ENCODE measurements at regions of chr1 and their contacts with region 1.

Region 1: DNA sequence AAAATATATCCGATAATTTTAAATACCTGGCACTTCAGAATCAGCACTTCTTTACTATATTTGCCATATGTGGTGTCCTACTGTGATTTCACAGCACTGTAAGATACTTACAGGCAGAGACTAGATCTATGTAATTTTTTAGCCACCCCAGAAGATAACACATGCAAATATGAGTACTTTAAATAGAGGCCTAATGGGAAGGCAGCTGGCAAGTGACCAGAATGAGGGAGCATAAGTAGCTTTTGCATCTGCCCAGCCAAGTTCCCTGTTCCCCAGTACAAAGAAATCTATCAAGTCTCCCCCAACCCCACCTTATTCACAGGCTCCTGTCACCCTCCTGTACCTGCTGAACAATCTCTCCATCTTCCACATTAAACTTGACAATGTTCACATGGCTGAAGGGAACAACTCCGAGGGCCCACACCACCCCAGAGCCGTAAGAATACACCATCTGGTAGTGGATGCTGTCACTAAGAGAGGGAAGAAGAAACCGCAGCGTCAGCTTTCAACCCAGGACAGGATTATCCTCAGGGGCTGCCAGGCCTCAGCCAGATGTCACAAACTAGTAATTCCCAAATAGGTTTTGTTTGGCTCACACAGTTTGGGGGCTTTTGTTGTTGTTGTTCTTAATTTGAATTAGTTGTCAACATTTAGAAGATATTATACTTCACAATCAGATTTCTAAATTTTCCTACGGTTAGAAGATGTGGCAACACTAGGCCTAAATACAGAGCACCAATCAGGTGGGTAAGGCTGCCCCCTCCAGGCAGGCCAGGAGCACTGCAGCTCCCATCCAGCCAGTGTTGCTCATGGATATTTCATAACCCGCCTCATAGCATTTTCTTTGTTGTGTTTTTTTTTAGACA is 10.4 kb downstream of the EMC1 start:
- DNase-seq: peak; percentile 60
- H3K4me3 ChIP-seq: no peak overlapping the region
- H3K27ac ChIP-seq: no peak overlapping the region
- H3K4me1 ChIP-seq: no peaks in the 10 kb centered on the region
- H3K27me3 ChIP-seq: no peaks in the 10 kb centered on the region
- CTCF ChIP-seq: peak; percentile 99

Region 2: GRCh38 chr1:19179597-19180264 is 61.2 kb before region 1 on chr1:
- intact Hi-C with region 1: loop called (anchors 5 kb)
- DNase-seq: no peak
- H3K4me3 ChIP-seq: no peak overlapping the region
- H3K27ac ChIP-seq: no peak overlapping the region
- H3K4me1 ChIP-seq: no peaks in the 10 kb centered on the region
- H3K27me3 ChIP-seq: no peaks in the 10 kb centered on the region
- CTCF ChIP-seq: no peak

Region 3: DNA sequence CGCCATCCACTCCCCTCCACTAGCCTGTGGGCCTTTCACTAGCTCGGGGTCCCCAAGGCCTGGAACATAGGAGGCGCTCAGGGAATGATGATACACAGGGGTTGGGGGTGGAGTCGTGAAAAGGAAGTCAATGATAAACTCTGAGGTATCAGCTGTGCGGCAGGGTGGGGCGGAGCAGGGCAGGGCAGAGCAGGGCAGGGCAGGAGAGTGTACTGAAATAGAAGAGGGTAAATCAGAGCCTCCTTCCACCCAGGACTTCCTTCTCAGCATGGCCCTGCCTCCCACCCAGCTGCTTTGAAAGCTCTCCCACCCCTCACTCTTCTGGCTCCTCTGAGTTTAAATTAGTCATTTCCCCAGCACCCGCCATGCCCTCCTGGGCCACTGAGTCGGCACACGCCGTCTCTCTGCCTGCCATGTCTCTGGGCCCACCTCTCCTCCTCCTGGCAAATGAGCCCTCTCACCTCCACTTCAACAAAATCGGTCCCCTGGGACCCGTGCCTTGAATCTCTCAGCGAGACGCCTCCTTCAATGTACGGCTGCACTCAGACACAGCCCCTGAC is 227.6 kb after region 1 on chr1:
- intact Hi-C with region 1: no loop called
- DNase-seq: peak; percentile 96
- H3K4me3 ChIP-seq: peak overlapping the region; percentile 10
- H3K27ac ChIP-seq: peak overlapping the region; percentile 92
- H3K4me1 ChIP-seq: peaks cover 35% of the 10 kb centered on the region
- H3K27me3 ChIP-seq: no peaks in the 10 kb centered on the region
- CTCF ChIP-seq: no peak